CD4-positive, alpha-beta T cell (primary cell): ENCODE measurements at regions of chr2 and their contacts with region 1.

Region 1: DNA sequence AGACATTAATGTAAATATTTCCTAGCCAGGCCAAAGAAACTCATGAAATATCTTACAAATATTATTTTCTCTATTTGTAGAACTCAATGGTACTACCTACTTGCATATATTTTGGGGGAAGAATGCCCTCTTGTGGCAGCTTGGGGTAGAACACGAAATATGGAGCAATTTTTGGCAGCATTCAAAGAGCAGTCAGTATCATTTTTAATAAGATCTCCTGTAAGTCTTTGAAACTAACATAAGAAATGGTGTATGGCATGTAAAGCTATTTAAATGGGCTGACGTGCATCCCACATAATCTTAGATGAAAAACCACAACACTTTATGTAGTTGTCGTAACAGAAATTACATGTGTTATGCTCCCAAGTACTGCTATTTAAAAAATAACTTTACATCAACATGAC is 62.3 kb upstream of the CCDC195 start:
- DNase-seq: peak; percentile 23 to 75 (median 50)
- ATAC-seq: peak; percentile 78
- H3K4me3 ChIP-seq: no peak overlapping the region
- H3K4me3 Mint-ChIP-seq: no peak overlapping the region
- H3K27ac ChIP-seq: no peak overlapping the region
- H3K27ac Mint-ChIP-seq: peak overlapping the region; percentile 59
- H3K4me1 ChIP-seq: no peaks in the 10 kb centered on the region
- H3K4me1 Mint-ChIP-seq: peaks cover 8% of the 10 kb centered on the region
- H3K27me3 ChIP-seq: no peaks in the 10 kb centered on the region
- H3K27me3 Mint-ChIP-seq: no peaks in the 10 kb centered on the region
- CTCF ChIP-seq: peak; percentile 97

Region 2: GRCh38 chr2:224136396-224136795 is 642.1 kb before region 1 on chr2:
- CTCF ChIA-PET with region 1: no interaction called
- POLR2A ChIA-PET with region 1: no interaction called
- intact Hi-C with region 1: loop called in 1 of 2 experiments (anchors 5 kb)
- DNase-seq: no peak
- ATAC-seq: no peak
- H3K4me3 ChIP-seq: no peak overlapping the region
- H3K4me3 Mint-ChIP-seq: no peak overlapping the region
- H3K27ac ChIP-seq: no peak overlapping the region
- H3K27ac Mint-ChIP-seq: no peak overlapping the region
- H3K4me1 ChIP-seq: no peaks in the 10 kb centered on the region
- H3K4me1 Mint-ChIP-seq: no peaks in the 10 kb centered on the region
- H3K27me3 ChIP-seq: peaks cover 0 to 13% of the 10 kb centered on the region in 2 experiments
- H3K27me3 Mint-ChIP-seq: peaks cover 42% of the 10 kb centered on the region
- CTCF ChIP-seq: no peak

Region 3: DNA sequence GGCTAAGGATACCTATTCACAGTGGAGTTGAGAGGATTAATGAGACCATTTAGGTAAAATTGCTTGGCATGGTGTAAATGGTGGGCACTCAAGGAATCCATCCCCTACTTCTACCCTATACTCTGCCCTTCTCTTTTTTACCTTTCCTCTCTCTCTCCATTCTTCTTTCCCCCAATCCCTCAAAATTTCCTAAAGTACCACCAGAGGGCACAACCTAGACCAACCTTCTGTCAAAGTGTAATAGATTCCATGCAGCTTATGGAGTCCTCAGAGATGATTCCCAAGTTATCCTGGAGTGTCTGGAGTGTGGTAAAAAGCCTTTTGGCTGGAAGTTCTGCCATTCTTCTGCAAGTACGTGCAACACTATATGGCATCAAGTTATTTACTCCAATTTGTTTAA is 29.3 kb before region 1 on chr2:
- CTCF ChIA-PET with region 1: no interaction called
- POLR2A ChIA-PET with region 1: no interaction called
- intact Hi-C with region 1: no loop called
- DNase-seq: no peak
- ATAC-seq: no peak
- H3K4me3 ChIP-seq: no peak overlapping the region
- H3K4me3 Mint-ChIP-seq: no peak overlapping the region
- H3K27ac ChIP-seq: no peak overlapping the region
- H3K27ac Mint-ChIP-seq: no peak overlapping the region
- H3K4me1 ChIP-seq: no peaks in the 10 kb centered on the region
- H3K4me1 Mint-ChIP-seq: no peaks in the 10 kb centered on the region
- H3K27me3 ChIP-seq: peaks cover 0 to 4% of the 10 kb centered on the region in 2 experiments
- H3K27me3 Mint-ChIP-seq: peaks cover 15% of the 10 kb centered on the region
- CTCF ChIP-seq: no peak

Region 4: GRCh38 chr2:224802407-224802806 is 23.9 kb after region 1 on chr2:
- CTCF ChIA-PET with region 1: no interaction called
- POLR2A ChIA-PET with region 1: no interaction called
- intact Hi-C with region 1: no loop called
- DNase-seq: no peak
- ATAC-seq: no peak
- H3K4me3 ChIP-seq: no peak overlapping the region
- H3K4me3 Mint-ChIP-seq: no peak overlapping the region
- H3K27ac ChIP-seq: no peak overlapping the region
- H3K27ac Mint-ChIP-seq: no peak overlapping the region
- H3K4me1 ChIP-seq: no peaks in the 10 kb centered on the region
- H3K4me1 Mint-ChIP-seq: no peaks in the 10 kb centered on the region
- H3K27me3 ChIP-seq: no peaks in the 10 kb centered on the region
- H3K27me3 Mint-ChIP-seq: no peaks in the 10 kb centered on the region
- CTCF ChIP-seq: no peak